ENCODE measurements at regions of chr6 and their contacts with region 1.

Region 1: GRCh38 chr6:26285143-26286134 is 79.6 kb upstream of the BTN3A2 start:
- DNase-seq: peak; percentile 99
- ATAC-seq: peak; percentile 79
- H3K4me3 Mint-ChIP-seq: peak overlapping the region; percentile 93
- H3K27ac Mint-ChIP-seq: peak overlapping the region; percentile 95
- H3K4me1 Mint-ChIP-seq: peaks cover 42% of the 10 kb centered on the region
- H3K27me3 Mint-ChIP-seq: peaks cover 2% of the 10 kb centered on the region

Region 2: DNA sequence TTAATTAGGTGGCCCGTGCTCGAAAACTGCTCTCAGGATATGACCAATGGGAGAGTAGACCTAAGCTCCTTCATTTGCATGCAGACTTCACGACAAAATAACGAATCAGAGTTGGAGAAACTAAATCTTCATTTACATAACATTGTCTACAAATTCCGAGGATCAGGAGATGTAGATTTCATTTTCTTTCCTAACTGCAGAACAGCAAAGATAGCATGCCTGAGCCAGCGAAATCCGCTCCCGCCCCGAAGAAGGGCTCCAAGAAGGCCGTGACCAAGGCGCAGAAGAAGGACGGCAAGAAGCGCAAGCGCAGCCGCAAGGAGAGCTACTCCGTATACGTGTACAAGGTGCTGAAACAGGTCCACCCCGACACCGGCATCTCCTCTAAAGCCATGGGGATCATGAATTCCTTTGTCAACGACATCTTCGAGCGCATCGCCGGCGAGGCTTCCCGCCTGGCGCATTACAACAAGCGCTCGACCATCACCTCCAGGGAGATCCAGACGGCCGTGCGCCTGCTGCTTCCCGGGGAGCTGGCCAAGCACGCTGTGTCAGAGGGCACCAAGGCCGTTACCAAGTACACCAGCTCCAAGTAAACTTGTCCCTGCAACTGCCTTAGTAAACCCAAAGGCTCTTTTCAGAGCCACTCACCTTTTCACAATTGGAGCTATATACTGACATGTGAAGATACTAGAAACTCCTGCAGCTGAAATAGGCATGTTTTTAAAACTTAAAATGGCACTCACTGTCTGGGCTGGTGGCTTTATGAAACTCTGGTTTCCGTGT is 101.7 kb before region 1 on chr6:
- CTCF ChIA-PET with region 1: no interaction called
- POLR2A ChIA-PET with region 1: interaction called, 26 read pairs
- DNase-seq: peak; percentile 80
- ATAC-seq: peak; percentile 80
- H3K4me3 Mint-ChIP-seq: peak overlapping the region; percentile 83
- H3K27ac Mint-ChIP-seq: peak overlapping the region; percentile 97
- H3K4me1 Mint-ChIP-seq: peaks cover 79% of the 10 kb centered on the region
- H3K27me3 Mint-ChIP-seq: no peaks in the 10 kb centered on the region

Region 3: DNA sequence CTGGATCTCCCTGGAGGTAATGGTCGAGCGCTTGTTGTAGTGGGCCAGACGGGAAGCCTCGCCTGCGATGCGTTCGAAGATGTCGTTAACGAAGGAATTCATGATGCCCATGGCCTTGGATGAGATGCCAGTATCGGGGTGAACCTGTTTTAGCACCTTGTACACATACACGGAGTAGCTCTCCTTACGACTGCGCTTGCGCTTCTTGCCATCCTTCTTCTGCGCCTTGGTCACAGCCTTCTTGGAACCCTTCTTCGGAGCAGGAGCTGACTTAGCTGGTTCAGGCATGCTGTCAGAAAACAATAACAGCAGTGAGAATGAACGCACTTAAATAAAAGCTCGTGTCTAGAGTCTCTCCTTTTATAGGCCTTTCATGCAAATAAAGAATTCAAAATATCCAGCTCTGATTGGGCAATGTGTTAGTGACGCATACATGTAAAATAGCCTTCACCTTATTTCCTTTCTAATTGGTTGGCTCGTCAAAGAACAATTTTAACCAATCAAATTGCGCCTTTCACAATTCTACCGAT is 69.0 kb before region 1 on chr6:
- CTCF ChIA-PET with region 1: no interaction called
- POLR2A ChIA-PET with region 1: interaction called, 50 read pairs
- DNase-seq: peak; percentile 93
- ATAC-seq: peak; percentile 67
- H3K4me3 Mint-ChIP-seq: no peak overlapping the region
- H3K27ac Mint-ChIP-seq: no peak overlapping the region
- H3K4me1 Mint-ChIP-seq: peaks cover 43% of the 10 kb centered on the region
- H3K27me3 Mint-ChIP-seq: no peaks in the 10 kb centered on the region

Region 4: GRCh38 chr6:26304797-26305640 is 19.6 kb after region 1 on chr6:
- CTCF ChIA-PET with region 1: interaction called, 4 read pairs
- POLR2A ChIA-PET with region 1: interaction called, 32 read pairs
- DNase-seq: peak; percentile 73
- ATAC-seq: peak; percentile 81
- H3K4me3 Mint-ChIP-seq: peak overlapping the region; percentile 83
- H3K27ac Mint-ChIP-seq: peak overlapping the region; percentile 92
- H3K4me1 Mint-ChIP-seq: peaks cover 57% of the 10 kb centered on the region
- H3K27me3 Mint-ChIP-seq: no peaks in the 10 kb centered on the region

Region 5: DNA sequence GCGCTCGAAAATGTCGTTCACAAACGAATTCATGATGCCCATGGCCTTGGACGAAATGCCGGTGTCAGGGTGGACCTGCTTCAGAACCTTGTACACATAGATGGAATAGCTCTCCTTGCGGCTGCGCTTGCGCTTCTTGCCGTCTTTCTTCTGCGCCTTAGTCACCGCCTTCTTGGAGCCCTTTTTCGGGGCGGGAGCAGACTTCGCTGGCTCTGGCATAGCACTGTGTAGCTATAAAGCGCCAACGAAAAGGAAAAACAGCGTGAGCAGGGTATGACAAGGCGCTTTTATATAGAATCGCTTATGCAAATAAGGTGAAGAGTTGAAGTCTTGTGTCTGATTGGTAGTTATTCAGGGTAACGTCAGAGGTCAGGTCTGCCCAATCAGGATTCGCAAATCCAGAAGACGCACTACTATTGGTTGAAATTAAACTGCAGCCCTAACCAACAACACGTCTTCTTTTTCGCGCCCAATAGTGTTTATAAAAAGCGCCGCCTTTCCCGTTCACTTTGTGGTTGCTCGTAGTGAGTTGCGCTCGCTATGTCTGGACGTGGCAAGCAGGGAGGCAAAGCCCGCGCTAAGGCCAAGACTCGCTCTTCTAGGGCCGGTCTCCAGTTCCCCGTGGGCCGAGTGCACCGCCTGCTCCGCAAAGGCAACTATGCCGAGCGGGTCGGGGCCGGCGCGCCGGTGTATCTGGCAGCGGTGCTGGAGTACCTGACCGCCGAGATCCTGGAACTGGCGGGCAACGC is 847.3 kb after region 1 on chr6:
- CTCF ChIA-PET with region 1: no interaction called
- POLR2A ChIA-PET with region 1: interaction called, 47 read pairs
- DNase-seq: peak; percentile 95
- ATAC-seq: peak; percentile 76
- H3K4me3 Mint-ChIP-seq: no peak overlapping the region
- H3K27ac Mint-ChIP-seq: no peak overlapping the region
- H3K4me1 Mint-ChIP-seq: peaks cover 68% of the 10 kb centered on the region
- H3K27me3 Mint-ChIP-seq: no peaks in the 10 kb centered on the region

Measured in activated CD8-positive, alpha-beta T cell treated with anti-CD3 and anti-CD28 coated beads, Interleukin-2, amount 10 ng/mL, durations not matched to agents 7 days and 5 days (primary cell).